A673 (cell line): ENCODE measurements at regions of chr20 and their contacts with region 1.

Region 1: GRCh38 chr20:21615617-21616080 is 89.8 kb upstream of the PAX1 start:
- DNase-seq: peak; percentile 87
- H3K4me3 ChIP-seq: no peak overlapping the region
- H3K27ac ChIP-seq: peak overlapping the region; percentile 64
- H3K4me1 ChIP-seq: peaks cover 32% of the 10 kb centered on the region
- H3K27me3 ChIP-seq: no peaks in the 10 kb centered on the region
- CTCF ChIP-seq: peak; percentile 98

Region 2: DNA sequence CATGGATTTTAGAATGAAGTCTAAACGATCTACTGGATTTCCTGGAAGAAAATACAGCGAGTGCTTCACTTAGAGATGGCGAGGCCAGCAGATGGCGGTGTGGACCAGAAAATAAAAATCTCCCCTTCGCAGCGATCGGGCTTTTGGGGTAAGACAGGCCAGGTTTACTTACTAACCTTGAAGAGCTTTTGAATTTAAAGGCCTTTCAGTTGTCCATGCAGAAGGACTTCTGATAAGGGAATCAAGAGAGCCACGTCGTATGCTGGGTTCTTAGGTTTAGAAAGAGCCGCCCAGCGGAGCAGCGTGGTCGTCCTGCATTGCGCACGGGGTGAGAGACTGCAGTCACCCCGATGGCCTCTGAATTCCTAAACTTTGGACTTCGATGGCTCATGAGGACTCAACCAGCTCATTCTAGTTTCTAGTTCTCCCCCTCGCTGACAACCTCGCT is 778.1 kb before region 1 on chr20:
- CTCF ChIA-PET with region 1: interaction called, 4 read pairs
- POLR2A ChIA-PET with region 1: no interaction called
- intact Hi-C with region 1: loop called (anchors 5 kb)
- DNase-seq: peak; percentile 82
- H3K4me3 ChIP-seq: no peak overlapping the region
- H3K27ac ChIP-seq: no peak overlapping the region
- H3K4me1 ChIP-seq: no peaks in the 10 kb centered on the region
- H3K27me3 ChIP-seq: no peaks in the 10 kb centered on the region
- CTCF ChIP-seq: peak; percentile 88

Region 3: GRCh38 chr20:20860078-20860806 is 755.4 kb before region 1 on chr20:
- CTCF ChIA-PET with region 1: no interaction called
- POLR2A ChIA-PET with region 1: no interaction called
- intact Hi-C with region 1: loop called (anchors 10 kb)
- DNase-seq: peak; percentile 93
- H3K4me3 ChIP-seq: no peak overlapping the region
- H3K27ac ChIP-seq: no peak overlapping the region
- H3K4me1 ChIP-seq: no peaks in the 10 kb centered on the region
- H3K27me3 ChIP-seq: no peaks in the 10 kb centered on the region
- CTCF ChIP-seq: peak; percentile 97

Region 4: DNA sequence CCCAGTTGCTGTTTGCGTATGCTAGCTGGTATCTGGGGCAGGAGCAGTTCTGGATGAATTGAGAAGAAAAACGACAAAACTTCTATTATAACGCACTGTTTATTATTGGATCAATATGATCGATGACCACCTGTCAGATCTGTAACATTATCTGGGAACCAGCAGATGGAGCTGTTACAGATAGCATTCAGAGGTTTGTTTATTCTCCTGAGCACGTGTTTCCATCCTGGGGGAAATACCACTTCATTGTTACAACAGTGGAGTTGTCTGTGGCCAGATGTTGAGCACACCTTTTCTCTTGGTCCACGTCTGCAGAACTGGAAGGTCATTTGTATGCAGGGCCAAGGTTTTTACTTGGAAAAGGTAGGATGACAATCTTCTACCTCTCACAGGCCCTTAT is 85.8 kb before region 1 on chr20:
- CTCF ChIA-PET with region 1: interaction called, 8 read pairs
- POLR2A ChIA-PET with region 1: no interaction called
- intact Hi-C with region 1: loop called (anchors 5 kb)
- DNase-seq: peak; percentile 45
- H3K4me3 ChIP-seq: no peak overlapping the region
- H3K27ac ChIP-seq: no peak overlapping the region
- H3K4me1 ChIP-seq: peaks cover 13% of the 10 kb centered on the region
- H3K27me3 ChIP-seq: no peaks in the 10 kb centered on the region
- CTCF ChIP-seq: peak; percentile 81

Region 5: DNA sequence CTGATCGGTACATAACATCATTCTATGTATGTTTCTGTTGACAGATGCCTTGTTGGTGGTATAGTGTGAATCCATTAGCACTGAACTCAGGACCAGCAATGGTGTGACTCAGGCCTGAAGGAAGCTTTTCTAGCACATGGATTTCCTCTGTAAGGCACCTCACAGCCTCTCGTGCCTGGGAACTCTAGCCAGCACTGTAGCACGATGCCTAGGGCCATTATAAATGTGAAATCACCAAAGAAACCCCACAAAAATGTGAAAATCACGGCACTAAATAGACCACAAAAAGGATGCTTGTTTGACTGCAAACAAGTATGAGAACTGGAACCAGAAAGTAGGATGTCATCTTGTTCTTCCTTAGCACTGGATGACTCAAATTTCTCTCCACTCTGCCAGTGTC is 38.1 kb before region 1 on chr20:
- CTCF ChIA-PET with region 1: interaction called, 14 read pairs
- POLR2A ChIA-PET with region 1: interaction called, 10 read pairs
- intact Hi-C with region 1: loop called (anchors 1 kb)
- DNase-seq: no peak
- H3K4me3 ChIP-seq: no peak overlapping the region
- H3K27ac ChIP-seq: peak overlapping the region; percentile 96
- H3K4me1 ChIP-seq: peaks cover 52% of the 10 kb centered on the region
- H3K27me3 ChIP-seq: no peaks in the 10 kb centered on the region
- CTCF ChIP-seq: no peak

Region 6: DNA sequence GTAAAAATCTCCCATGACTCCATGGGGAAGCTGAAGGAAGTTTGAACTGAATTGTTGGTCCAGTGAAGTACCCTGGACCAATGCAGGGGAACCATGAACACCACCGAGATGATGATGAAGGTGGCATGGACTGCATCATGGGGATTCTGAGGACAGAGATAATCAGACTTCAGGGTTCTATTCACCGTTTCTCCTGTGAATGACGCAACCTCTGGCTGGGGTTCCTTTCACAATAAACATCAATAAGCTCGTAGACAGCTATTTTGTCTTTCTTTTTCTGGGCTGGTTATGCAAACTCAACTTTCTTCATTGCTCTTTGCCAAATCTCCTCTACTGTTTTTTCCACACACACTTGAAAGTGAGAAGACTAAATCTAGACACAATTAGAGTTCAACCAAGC is 13.8 kb before region 1 on chr20:
- CTCF ChIA-PET with region 1: no interaction called
- POLR2A ChIA-PET with region 1: no interaction called
- intact Hi-C with region 1: no loop called
- DNase-seq: no peak
- H3K4me3 ChIP-seq: no peak overlapping the region
- H3K27ac ChIP-seq: no peak overlapping the region
- H3K4me1 ChIP-seq: no peaks in the 10 kb centered on the region
- H3K27me3 ChIP-seq: no peaks in the 10 kb centered on the region
- CTCF ChIP-seq: no peak

Region 7: DNA sequence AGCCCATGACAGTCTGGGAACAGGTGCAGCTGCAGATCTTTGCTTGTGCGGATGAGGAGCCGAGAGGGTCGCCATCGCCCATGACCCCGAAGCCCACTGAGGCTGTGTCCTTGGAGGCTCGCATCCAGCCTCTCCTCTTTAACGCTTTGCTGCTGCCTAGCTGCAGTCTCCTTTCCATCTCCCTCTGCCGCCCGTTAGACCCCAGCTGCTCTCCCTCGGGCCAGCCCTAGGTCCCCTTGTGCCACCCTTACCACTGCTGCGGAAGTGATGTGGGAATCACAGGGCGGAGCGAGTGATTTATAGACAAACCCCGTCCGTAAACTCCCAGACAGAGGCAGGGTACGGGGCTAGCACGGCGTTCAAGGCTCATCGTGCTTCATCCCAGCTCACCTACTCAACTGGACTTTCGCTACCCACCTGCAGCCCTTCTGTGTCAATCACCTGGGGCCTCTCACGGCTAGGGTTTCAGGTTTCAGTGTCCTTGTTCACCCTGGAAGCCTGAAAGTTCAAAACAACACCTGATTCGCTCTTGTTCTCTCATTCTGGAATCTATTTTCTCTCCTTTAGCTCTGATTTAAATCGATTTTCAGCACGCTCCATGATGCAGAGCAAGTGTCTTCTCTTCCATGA is 165.9 kb after region 1 on chr20:
- CTCF ChIA-PET with region 1: no interaction called
- POLR2A ChIA-PET with region 1: no interaction called
- intact Hi-C with region 1: no loop called
- DNase-seq: no peak
- H3K4me3 ChIP-seq: no peak overlapping the region
- H3K27ac ChIP-seq: no peak overlapping the region
- H3K4me1 ChIP-seq: no peaks in the 10 kb centered on the region
- H3K27me3 ChIP-seq: peaks cover 59% of the 10 kb centered on the region
- CTCF ChIP-seq: no peak